ENCODE measurements at regions of chr11 and their contacts with region 1.

Region 1: DNA sequence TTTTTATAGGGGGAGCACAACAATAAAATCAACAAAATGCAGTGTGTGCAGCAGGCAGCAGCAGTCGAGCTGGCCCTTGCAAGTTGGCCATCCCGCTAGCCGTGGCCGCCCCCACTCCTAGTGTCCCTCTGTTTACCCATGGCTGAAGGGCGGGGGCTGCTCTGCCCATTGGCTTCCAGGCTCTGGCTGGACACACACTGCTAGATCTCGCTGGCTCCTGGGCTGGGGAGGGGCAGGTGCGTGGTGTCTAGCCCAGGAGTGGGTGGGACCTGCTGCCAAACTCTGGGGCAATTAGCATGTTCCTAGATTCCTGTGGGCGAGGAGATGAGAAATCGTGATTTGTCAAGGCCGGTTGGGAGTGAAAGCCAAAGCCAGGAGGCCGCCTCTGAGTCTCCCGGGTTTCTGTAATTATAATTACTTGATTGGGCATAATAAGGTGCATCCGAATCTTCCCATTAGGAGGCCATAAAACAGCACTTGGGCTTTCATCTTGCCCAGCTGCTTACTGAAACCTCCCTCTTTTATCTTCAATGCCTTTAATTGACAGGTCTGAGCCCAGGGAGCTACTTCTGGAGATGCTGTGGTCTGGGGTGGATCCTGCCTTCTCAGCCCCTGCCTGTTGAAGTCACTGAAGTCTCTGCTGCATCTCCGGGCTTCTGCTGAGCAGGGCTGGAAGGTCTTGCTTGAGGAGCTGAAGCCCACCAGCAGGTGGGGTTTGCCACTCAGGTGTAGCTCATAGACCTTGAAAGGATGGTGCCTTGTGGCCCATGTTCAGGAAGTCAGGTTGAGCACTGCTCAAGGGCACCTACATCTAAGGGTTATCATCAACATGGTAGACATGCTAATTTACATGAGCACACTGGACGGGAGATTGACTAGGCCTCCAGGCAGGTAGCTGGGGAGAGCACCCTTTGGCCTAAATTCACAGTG is 44.5 kb upstream of the DKK3 start:
- DNase-seq: peak in 1 of 6 donors; percentile 34
- ATAC-seq: no peak
- H3K4me3 ChIP-seq: no peak overlapping the region
- H3K27ac ChIP-seq: no peak overlapping the region
- H3K4me1 ChIP-seq: peaks cover 7 to 16% (median 14%) of the 10 kb centered on the region in 3 donors
- H3K27me3 ChIP-seq: no peaks in the 10 kb centered on the region
- CTCF ChIP-seq: no peak

Region 2: GRCh38 chr11:11987503-11988022 is 65.4 kb before region 1 on chr11:
- intact Hi-C with region 1: no loop called
- DNase-seq: no peak
- ATAC-seq: no peak
- H3K4me3 ChIP-seq: no peak overlapping the region
- H3K27ac ChIP-seq: no peak overlapping the region
- H3K4me1 ChIP-seq: no peaks in the 10 kb centered on the region
- H3K27me3 ChIP-seq: no peaks in the 10 kb centered on the region
- CTCF ChIP-seq: peak in 1 of 4 donors; percentile 18

Region 3: GRCh38 chr11:12281571-12282478 is 228.9 kb after region 1 on chr11:
- intact Hi-C with region 1: loop called (anchors 5 kb)
- DNase-seq: peak; percentile 73 to 93 (median 88)
- ATAC-seq: peak; percentile 77 to 90 (median 88)
- H3K4me3 ChIP-seq: no peak overlapping the region
- H3K27ac ChIP-seq: no peak overlapping the region
- H3K4me1 ChIP-seq: peaks cover 0 to 4% (median 3%) of the 10 kb centered on the region in 3 donors
- H3K27me3 ChIP-seq: no peaks in the 10 kb centered on the region
- CTCF ChIP-seq: peak; percentile 89 to 96 (median 89)

Region 4: GRCh38 chr11:12289667-12290476 is 236.9 kb after region 1 on chr11:
- intact Hi-C with region 1: loop called in 1 of 3 experiments (anchors 5 kb)
- DNase-seq: no peak
- ATAC-seq: no peak
- H3K4me3 ChIP-seq: no peak overlapping the region
- H3K27ac ChIP-seq: no peak overlapping the region
- H3K4me1 ChIP-seq: no peaks in the 10 kb centered on the region
- H3K27me3 ChIP-seq: no peaks in the 10 kb centered on the region
- CTCF ChIP-seq: no peak

Measured in pancreas (tissue), 10 donors.